Activated T-helper 2 cell treated with anti-CD3 and anti-CD28 coated beads, Interferon-gamma antibody, Interleukin-2, Interleukin-4, amounts not matched to agents 10 μg/mL and 5 μg/mL and 100 μg/mL, durations not matched to agents 14 hours and 24 hours and 36 hours (primary cell): ENCODE measurements at regions of chr10 and their contacts with region 1.

Region 1: GRCh38 chr10:87734987-87735827 is 75.5 kb downstream of the PAPSS2 start:
- DNase-seq: no peak
- H3K4me3 Mint-ChIP-seq: no peak overlapping the region
- H3K27ac Mint-ChIP-seq: no peak overlapping the region
- H3K4me1 Mint-ChIP-seq: no peaks in the 10 kb centered on the region
- H3K27me3 Mint-ChIP-seq: peaks cover 30% of the 10 kb centered on the region

Region 2: GRCh38 chr10:87659571-87660483 is 75.4 kb before region 1 on chr10 and contains the start of gene PAPSS2:
- intact Hi-C with region 1: loop called (anchors 2 kb)
- DNase-seq: no peak
- H3K4me3 Mint-ChIP-seq: peak within 1 kb of the TSS; percentile 74
- H3K27ac Mint-ChIP-seq: no peak within 1 kb of the TSS
- H3K4me1 Mint-ChIP-seq: peaks cover 8% of the 10 kb centered on the region
- H3K27me3 Mint-ChIP-seq: peaks cover 54% of the 10 kb centered on the region
- total RNA-seq, gene PAPSS2: 0.21 and 0.25 TPM in 2 replicates

Region 3: DNA sequence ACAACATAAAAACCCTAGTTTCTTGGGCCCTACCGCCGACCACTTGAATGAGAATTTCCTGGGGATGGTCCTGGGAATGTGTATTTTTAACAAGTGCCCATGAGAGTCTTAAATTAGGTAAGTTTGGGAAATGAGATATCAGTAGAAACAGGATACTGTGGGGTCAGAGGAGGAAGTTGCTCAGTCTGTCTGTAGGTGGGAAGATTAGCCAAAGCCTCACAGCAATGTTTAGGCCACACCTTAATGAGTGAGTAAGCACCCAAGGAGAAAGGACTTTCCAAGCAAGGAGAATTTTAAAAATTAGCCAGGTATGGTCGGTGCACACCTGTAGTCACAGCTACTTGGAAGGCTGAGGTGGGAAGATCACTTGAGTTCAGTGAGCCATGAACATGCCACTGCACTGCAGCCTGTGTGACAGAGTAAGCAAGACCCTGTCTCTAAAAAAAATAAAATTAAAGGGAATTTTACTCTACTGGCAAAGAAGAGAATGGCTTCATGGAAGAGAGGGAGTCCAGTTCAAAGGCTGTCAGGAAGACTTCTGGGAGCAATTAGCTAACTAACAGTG is 43.6 kb before region 1 on chr10:
- intact Hi-C with region 1: no loop called
- DNase-seq: no peak
- H3K4me3 Mint-ChIP-seq: no peak overlapping the region
- H3K27ac Mint-ChIP-seq: no peak overlapping the region
- H3K4me1 Mint-ChIP-seq: no peaks in the 10 kb centered on the region
- H3K27me3 Mint-ChIP-seq: peaks cover 12% of the 10 kb centered on the region